ENCODE measurements at regions of chrX and their contacts with region 1.

Region 1: GRCh38 chrX:87583679-87584078 is 66.1 kb downstream of the KLHL4 start:
- DNase-seq: peak; percentile 6
- H3K4me3 ChIP-seq: no peak overlapping the region
- H3K27ac ChIP-seq: no peak overlapping the region
- H3K4me1 ChIP-seq: no peaks in the 10 kb centered on the region
- H3K27me3 ChIP-seq: no peaks in the 10 kb centered on the region
- CTCF ChIP-seq: peak; percentile 43 to 63

Region 2: DNA sequence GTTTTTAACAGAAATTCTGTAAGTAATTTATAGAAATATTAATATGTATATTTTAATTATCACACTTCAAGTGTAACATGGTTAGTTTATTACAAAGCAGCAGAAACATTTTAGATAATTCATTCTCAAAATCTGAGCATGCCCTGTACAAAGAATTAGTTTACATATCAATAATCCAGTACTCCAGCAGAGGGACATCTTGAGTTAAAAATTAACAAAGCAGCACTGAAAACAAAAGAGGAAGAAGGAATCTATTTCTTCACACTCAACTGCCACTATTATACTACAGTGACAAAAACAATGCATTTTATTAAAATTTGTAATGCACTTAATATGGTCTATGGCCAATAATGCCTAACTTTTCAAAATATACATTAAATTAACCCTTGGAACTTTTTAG is 245.2 kb before region 1 on chrX:
- CTCF ChIA-PET with region 1: no interaction called
- dilution Hi-C with region 1: no loop called
- in situ Hi-C with region 1: no loop called
- intact Hi-C with region 1: loop called (anchors 5 kb)
- DNase-seq: peak; percentile 15
- H3K4me3 ChIP-seq: no peak overlapping the region
- H3K27ac ChIP-seq: no peak overlapping the region
- H3K4me1 ChIP-seq: no peaks in the 10 kb centered on the region
- H3K27me3 ChIP-seq: peaks cover 2% of the 10 kb centered on the region
- CTCF ChIP-seq: peak; percentile 20 to 49

Region 3: DNA sequence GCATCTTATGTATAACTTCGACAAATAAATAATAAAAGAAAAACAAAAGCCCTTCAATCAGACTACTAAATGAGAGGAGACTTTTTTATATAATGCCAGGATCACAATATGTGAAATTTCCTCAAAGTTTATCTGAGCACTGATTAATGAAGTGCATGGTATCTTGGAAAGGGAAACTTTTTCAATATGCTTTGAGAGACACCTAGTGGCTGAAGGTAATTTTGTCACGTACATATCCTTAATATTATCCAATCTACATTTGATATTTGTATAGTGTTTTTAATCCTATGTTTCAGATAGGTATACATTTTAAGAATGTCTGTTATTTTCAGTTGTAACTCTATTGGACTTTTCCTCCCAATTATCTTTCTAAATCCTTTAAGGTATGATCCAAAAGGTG is 80.7 kb after region 1 on chrX:
- CTCF ChIA-PET with region 1: no interaction called
- dilution Hi-C with region 1: no loop called
- in situ Hi-C with region 1: no loop called
- intact Hi-C with region 1: loop called (anchors 1 kb)
- DNase-seq: peak; percentile 18
- H3K4me3 ChIP-seq: no peak overlapping the region
- H3K27ac ChIP-seq: no peak overlapping the region
- H3K4me1 ChIP-seq: no peaks in the 10 kb centered on the region
- H3K27me3 ChIP-seq: no peaks in the 10 kb centered on the region
- CTCF ChIP-seq: peak; percentile 46 to 59

Region 4: GRCh38 chrX:88613338-88613737 is 1029.7 kb after region 1 on chrX:
- CTCF ChIA-PET with region 1: no interaction called
- dilution Hi-C with region 1: no loop called
- in situ Hi-C with region 1: no loop called
- intact Hi-C with region 1: loop called (anchors 5 kb)
- DNase-seq: no peak
- H3K4me3 ChIP-seq: no peak overlapping the region
- H3K27ac ChIP-seq: no peak overlapping the region
- H3K4me1 ChIP-seq: no peaks in the 10 kb centered on the region
- H3K27me3 ChIP-seq: no peaks in the 10 kb centered on the region
- CTCF ChIP-seq: peak; percentile 34 to 52